IMR-90 (cell line): ENCODE measurements at regions of chr6 and their contacts with region 1.

Region 1: DNA sequence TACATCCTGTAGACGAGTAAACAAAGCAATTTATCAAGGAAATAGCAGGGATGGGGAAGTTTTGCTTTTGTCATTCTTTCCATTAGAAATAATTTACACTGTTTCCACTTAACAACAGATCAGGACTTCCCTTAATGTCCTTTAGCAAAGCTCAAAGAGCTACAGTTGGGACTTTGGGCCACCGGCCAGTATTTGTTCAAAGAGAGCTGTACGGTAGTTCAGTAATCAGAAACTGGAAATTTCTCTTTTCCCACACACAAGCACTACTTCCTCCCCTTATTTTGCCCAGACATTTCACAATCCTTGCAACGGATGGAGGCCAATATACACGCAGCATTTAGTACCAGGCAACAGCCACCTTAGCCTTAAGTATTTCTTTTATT is 12.1 kb upstream of the HINT3 start:
- DNase-seq: peak; percentile 88
- ATAC-seq: 0 out of 2 replicates have a peak, but pooled peaks have one; percentile 16
- H3K4me3 ChIP-seq: no peak overlapping the region
- H3K27ac ChIP-seq: peak overlapping the region; percentile 62; the same call in 1 of the 2 replicates
- H3K4me1 ChIP-seq: peaks cover 28% of the 10 kb centered on the region
- H3K27me3 ChIP-seq: no peaks in the 10 kb centered on the region
- CTCF ChIP-seq: no peak
- POLR2A ChIP-seq: no peak
- RAD21 ChIP-seq: no peak

Region 2: GRCh38 chr6:125872259-125872921 is 72.0 kb before region 1 on chr6:
- CTCF ChIA-PET with region 1: no interaction called
- POLR2A ChIA-PET with region 1: no interaction called
- dilution Hi-C with region 1: no loop called
- in situ Hi-C with region 1: no loop called
- intact Hi-C with region 1: loop called (anchors 5 kb)
- DNase-seq: peak; percentile 25
- ATAC-seq: peak; percentile 45; the same call in 1 of the 2 replicates
- H3K4me3 ChIP-seq: no peak overlapping the region
- H3K27ac ChIP-seq: no peak overlapping the region; the same call in 1 of the 2 replicates
- H3K4me1 ChIP-seq: peaks cover 5% of the 10 kb centered on the region
- H3K27me3 ChIP-seq: no peaks in the 10 kb centered on the region
- CTCF ChIP-seq: no peak
- POLR2A ChIP-seq: no peak
- RAD21 ChIP-seq: no peak

Region 3: GRCh38 chr6:125966569-125966968 is 22.1 kb after region 1 on chr6:
- CTCF ChIA-PET with region 1: no interaction called
- POLR2A ChIA-PET with region 1: no interaction called
- dilution Hi-C with region 1: no loop called
- in situ Hi-C with region 1: no loop called
- intact Hi-C with region 1: no loop called
- DNase-seq: no peak
- ATAC-seq: no peak
- H3K4me3 ChIP-seq: no peak overlapping the region
- H3K27ac ChIP-seq: no peak overlapping the region
- H3K4me1 ChIP-seq: no peaks in the 10 kb centered on the region
- H3K27me3 ChIP-seq: no peaks in the 10 kb centered on the region
- CTCF ChIP-seq: no peak
- POLR2A ChIP-seq: no peak
- RAD21 ChIP-seq: no peak

Region 4: GRCh38 chr6:127812985-127813698 is 1868.7 kb after region 1 on chr6:
- CTCF ChIA-PET with region 1: no interaction called
- POLR2A ChIA-PET with region 1: interaction called, 10 read pairs
- dilution Hi-C with region 1: no loop called
- in situ Hi-C with region 1: no loop called
- intact Hi-C with region 1: no loop called
- DNase-seq: no peak
- ATAC-seq: no peak
- H3K4me3 ChIP-seq: no peak overlapping the region
- H3K27ac ChIP-seq: no peak overlapping the region
- H3K4me1 ChIP-seq: no peaks in the 10 kb centered on the region
- H3K27me3 ChIP-seq: peaks cover 12% of the 10 kb centered on the region
- CTCF ChIP-seq: no peak
- POLR2A ChIP-seq: no peak
- RAD21 ChIP-seq: no peak